MCF 10A (cell line): ENCODE measurements at regions of chr13 and their contacts with region 1.

Region 1: GRCh38 chr13:113208424-113209335 is at the start of gene PCID2:
- DNase-seq: peak; percentile 90
- H3K4me3 Mint-ChIP-seq: peak within 1 kb of the TSS; percentile 92
- H3K27ac Mint-ChIP-seq: peak within 1 kb of the TSS; percentile 82
- H3K4me1 Mint-ChIP-seq: peaks cover 44% of the 10 kb centered on the region
- H3K27me3 Mint-ChIP-seq: no peaks in the 10 kb centered on the region
- CTCF ChIP-seq: no peak
- total RNA-seq, gene PCID2: 60.7 and 63.4 TPM in 2 replicates

Region 2: GRCh38 chr13:113187263-113187669 is 21.4 kb before region 1 on chr13:
- CTCF ChIA-PET with region 1: interaction called, 3 read pairs
- POLR2A ChIA-PET with region 1: interaction called, 41 read pairs
- intact Hi-C with region 1: loop called (anchors 2 kb)
- DNase-seq: peak; percentile 98
- H3K4me3 Mint-ChIP-seq: peak overlapping the region; percentile 56
- H3K27ac Mint-ChIP-seq: peak overlapping the region; percentile 94
- H3K4me1 Mint-ChIP-seq: peaks cover 8% of the 10 kb centered on the region
- H3K27me3 Mint-ChIP-seq: no peaks in the 10 kb centered on the region
- CTCF ChIP-seq: no peak

Region 3: DNA sequence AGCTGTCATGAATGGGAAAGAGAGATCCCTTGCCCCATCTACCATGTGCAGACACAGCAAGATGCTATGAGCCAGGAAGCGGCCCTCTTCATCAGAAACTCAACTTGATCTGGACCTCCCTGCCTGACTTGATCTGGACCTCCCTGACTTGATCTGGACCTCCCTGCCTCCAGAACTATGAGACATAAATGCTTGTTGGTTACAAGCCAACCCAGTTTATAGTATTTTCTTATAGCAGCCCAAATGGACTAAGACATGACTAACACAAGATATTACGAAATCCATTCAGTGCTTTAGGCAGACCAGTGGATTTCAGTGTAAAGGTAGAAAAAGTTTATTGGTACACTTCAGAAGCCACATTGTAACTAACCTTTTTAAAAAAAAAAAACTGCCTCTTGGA is 15.8 kb before region 1 on chr13:
- CTCF ChIA-PET with region 1: no interaction called
- POLR2A ChIA-PET with region 1: interaction called, 10 read pairs
- intact Hi-C with region 1: loop called (anchors 2 kb)
- DNase-seq: peak; percentile 67
- H3K4me3 Mint-ChIP-seq: no peak overlapping the region
- H3K27ac Mint-ChIP-seq: no peak overlapping the region
- H3K4me1 Mint-ChIP-seq: peaks cover 7% of the 10 kb centered on the region
- H3K27me3 Mint-ChIP-seq: no peaks in the 10 kb centered on the region
- CTCF ChIP-seq: no peak

Region 4: DNA sequence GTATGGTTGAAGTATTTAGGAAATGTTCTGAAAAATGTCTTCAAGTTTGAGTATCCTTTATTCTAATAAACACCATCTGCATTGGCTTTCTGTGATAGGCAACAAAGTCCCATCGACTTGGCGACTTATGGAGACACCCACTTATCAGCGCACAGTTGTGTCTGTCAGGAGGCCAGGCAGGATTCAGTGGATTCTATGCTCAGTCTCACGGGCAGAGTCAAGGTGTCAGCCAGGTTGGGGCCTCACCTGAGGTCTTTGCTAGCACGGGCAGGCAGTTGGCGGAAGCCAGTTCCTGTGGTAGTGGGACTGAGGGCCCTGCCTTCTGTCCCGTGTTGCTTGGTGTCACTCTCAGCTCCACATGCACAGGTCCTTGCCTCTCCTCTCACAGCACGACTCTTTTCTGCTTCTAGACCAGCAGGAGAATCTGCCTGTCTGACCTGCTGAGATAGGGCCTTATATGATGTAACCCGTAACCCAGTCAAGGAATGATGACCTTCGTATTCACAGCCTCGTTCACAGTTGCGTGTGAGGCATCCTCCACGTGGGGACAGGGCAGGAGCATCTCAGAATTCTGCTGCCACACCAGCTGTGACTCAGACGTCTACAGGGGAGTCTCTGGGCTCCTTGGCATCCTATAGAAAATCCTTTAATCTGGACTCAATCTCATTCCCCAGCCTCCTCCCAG is 10.7 kb after region 1 on chr13:
- CTCF ChIA-PET with region 1: interaction called, 3 read pairs
- POLR2A ChIA-PET with region 1: interaction called, 21 read pairs
- intact Hi-C with region 1: no loop called
- DNase-seq: no peak
- H3K4me3 Mint-ChIP-seq: no peak overlapping the region
- H3K27ac Mint-ChIP-seq: no peak overlapping the region
- H3K4me1 Mint-ChIP-seq: peaks cover 4% of the 10 kb centered on the region
- H3K27me3 Mint-ChIP-seq: no peaks in the 10 kb centered on the region
- CTCF ChIP-seq: no peak

Region 5: GRCh38 chr13:113296842-113297369 is 88.2 kb after region 1 on chr13 and contains the start of gene LAMP1:
- CTCF ChIA-PET with region 1: no interaction called
- POLR2A ChIA-PET with region 1: interaction called, 36 read pairs
- intact Hi-C with region 1: loop called (anchors 5 kb)
- DNase-seq: peak; percentile 95
- H3K4me3 Mint-ChIP-seq: peak within 1 kb of the TSS; percentile 77
- H3K27ac Mint-ChIP-seq: peak within 1 kb of the TSS; percentile 97
- H3K4me1 Mint-ChIP-seq: peaks cover 18% of the 10 kb centered on the region
- H3K27me3 Mint-ChIP-seq: peaks cover 8% of the 10 kb centered on the region
- CTCF ChIP-seq: no peak
- total RNA-seq, gene LAMP1: 141 and 150 TPM in 2 replicates

Region 6: GRCh38 chr13:113448885-113449692 is 240.4 kb after region 1 on chr13:
- CTCF ChIA-PET with region 1: no interaction called
- POLR2A ChIA-PET with region 1: interaction called, 4 read pairs
- intact Hi-C with region 1: loop called (anchors 2 kb)
- DNase-seq: peak; percentile 95
- H3K4me3 Mint-ChIP-seq: peak overlapping the region; percentile 85
- H3K27ac Mint-ChIP-seq: peak overlapping the region; percentile 94
- H3K4me1 Mint-ChIP-seq: peaks cover 6% of the 10 kb centered on the region
- H3K27me3 Mint-ChIP-seq: no peaks in the 10 kb centered on the region
- CTCF ChIP-seq: no peak